ENCODE measurements at regions of chr10 and their contacts with region 1.

Region 1: DNA sequence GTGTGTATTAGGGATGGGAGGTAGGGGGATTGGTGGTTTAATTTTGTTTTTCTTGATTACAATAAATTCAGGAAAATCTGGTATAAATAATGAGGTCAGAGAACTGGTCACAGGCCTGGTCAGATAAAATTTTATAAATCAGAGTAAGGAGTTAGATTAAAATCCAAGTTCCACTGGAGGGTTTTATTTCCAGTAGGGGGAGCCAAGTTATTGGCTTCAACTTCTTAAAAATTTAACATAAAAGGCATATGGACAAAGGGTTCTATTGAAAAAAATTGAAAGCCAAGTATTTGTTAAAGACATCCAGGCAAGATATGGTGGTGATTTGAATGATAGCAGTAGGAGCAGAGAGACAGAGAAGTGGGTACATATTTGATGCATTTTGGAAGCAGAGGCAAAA is 763.3 kb downstream of the SORCS1 start:
- DNase-seq: peak; percentile 73
- H3K4me3 ChIP-seq: no peak overlapping the region
- H3K27ac ChIP-seq: no peak overlapping the region
- H3K4me1 ChIP-seq: peaks cover 30% of the 10 kb centered on the region
- H3K27me3 ChIP-seq: no peaks in the 10 kb centered on the region
- CTCF ChIP-seq: peak; percentile 76

Region 2: GRCh38 chr10:106500559-106501525 is 99.7 kb after region 1 on chr10:
- CTCF ChIA-PET with region 1: no interaction called
- POLR2A ChIA-PET with region 1: no interaction called
- intact Hi-C with region 1: loop called (anchors 5 kb)
- DNase-seq: no peak
- H3K4me3 ChIP-seq: no peak overlapping the region
- H3K27ac ChIP-seq: peak overlapping the region; percentile 8
- H3K4me1 ChIP-seq: peaks cover 68% of the 10 kb centered on the region
- H3K27me3 ChIP-seq: no peaks in the 10 kb centered on the region
- CTCF ChIP-seq: no peak

Region 3: DNA sequence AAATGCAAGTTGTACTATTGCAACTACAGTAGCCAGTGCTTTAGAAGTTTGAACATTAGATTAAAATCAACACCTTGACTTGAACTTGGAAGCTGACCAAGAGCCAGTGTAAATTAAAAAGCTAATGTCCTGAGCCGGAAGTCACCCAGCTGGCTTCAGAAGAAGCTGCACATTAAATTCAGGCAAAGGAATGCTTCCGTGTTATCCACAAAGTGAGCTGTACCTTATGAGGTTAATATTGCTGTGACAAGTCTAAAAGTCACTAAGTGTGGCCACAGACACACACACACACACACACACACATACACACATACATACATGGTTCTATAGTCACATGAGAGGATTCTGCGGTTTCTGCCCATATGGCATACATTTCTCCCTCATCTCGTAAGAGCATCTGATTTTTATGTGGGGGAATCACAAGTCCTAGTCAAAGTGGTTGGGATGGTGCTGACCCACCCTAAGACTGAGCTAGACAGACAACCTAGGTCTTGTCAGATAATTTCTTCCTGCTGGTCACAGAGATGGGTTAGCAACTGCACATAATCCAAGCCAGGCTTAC is 150.4 kb after region 1 on chr10:
- CTCF ChIA-PET with region 1: no interaction called
- POLR2A ChIA-PET with region 1: no interaction called
- intact Hi-C with region 1: loop called (anchors 5 kb)
- DNase-seq: peak; percentile 93
- H3K4me3 ChIP-seq: peak overlapping the region; percentile 51
- H3K27ac ChIP-seq: peak overlapping the region; percentile 90
- H3K4me1 ChIP-seq: peaks cover 66% of the 10 kb centered on the region
- H3K27me3 ChIP-seq: no peaks in the 10 kb centered on the region
- CTCF ChIP-seq: no peak

Region 4: DNA sequence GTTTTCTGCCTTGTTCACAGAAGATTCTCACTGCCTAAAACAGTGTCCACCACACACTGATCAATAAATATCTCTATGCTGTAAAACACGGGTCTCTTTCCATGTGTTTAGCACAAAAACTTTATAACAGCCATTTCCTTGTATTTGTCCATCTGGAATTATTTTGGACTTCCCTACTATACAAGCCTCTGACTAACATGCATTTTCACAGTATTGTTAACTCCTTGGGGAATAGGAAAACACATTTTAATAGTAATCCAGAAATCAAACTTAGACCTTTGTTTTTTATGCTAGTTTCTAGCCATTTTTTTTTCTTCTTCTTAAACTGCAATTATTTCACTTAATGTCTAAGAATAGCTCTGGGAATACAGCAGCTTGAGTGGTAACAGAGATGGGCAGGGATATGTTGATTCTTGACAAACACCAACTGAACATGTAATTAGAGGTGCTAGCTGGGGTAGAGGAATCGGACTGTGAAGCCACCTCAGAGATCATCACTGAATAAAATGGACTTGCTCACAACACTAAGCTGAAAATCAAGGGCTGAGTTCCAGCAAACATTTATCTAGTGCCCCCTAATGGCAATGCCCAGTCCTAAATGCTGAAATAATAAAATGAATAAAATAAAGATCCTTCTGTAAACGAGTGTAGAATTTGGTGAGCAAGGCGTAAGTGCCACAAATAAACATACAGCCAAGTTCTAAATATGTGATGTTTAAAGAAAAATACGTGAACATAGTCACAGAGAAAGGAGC is 170.2 kb after region 1 on chr10:
- CTCF ChIA-PET with region 1: interaction called, 4 read pairs
- POLR2A ChIA-PET with region 1: no interaction called
- intact Hi-C with region 1: loop called (anchors 2 kb)
- DNase-seq: peak; percentile 82
- H3K4me3 ChIP-seq: no peak overlapping the region
- H3K27ac ChIP-seq: no peak overlapping the region
- H3K4me1 ChIP-seq: peaks cover 39% of the 10 kb centered on the region
- H3K27me3 ChIP-seq: no peaks in the 10 kb centered on the region
- CTCF ChIP-seq: peak; percentile 79

Region 5: DNA sequence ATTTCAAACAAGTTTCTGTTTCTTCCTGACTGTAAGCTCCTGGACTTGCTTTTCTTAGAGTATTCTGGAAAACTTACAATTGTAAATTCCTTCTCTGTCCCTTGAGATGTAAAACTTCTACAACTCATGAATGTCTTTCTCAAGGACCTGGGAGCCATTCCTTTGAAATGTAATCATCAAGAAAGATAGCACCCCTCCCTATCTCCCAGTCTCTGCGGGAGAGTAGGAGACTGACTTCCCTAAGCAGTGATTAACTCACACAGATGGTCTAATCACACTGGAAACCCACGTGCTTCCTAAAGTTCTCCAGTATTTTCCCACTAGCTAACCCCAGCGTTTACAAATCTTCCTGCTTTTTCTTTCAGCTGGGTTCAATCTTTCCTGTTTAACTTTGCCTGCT is 213.9 kb after region 1 on chr10:
- CTCF ChIA-PET with region 1: no interaction called
- POLR2A ChIA-PET with region 1: no interaction called
- intact Hi-C with region 1: loop called (anchors 5 kb)
- DNase-seq: no peak
- H3K4me3 ChIP-seq: no peak overlapping the region
- H3K27ac ChIP-seq: no peak overlapping the region
- H3K4me1 ChIP-seq: peaks cover 17% of the 10 kb centered on the region
- H3K27me3 ChIP-seq: no peaks in the 10 kb centered on the region
- CTCF ChIP-seq: no peak

Region 6: DNA sequence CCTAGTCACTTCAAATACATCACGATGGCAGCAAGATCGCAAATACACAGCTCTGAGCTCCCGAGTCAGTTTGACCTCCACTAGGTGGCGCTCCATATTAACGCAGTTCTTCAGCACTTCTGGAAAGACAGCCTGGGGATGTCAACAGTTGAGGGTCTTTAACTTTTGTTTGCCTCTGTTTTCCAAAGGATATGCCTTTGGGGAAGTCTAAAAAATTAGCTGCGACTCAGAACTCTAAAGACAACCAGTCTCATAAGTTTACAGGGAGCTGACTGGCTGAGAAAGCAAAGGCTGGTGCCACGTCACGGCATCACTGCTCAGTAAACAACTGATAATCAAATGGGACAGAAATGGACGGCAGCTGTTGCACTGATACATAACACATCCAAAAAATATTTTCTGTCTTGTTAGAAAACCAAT is 304.5 kb after region 1 on chr10:
- CTCF ChIA-PET with region 1: no interaction called
- POLR2A ChIA-PET with region 1: no interaction called
- intact Hi-C with region 1: loop called (anchors 10 kb)
- DNase-seq: peak; percentile 81
- H3K4me3 ChIP-seq: no peak overlapping the region
- H3K27ac ChIP-seq: no peak overlapping the region
- H3K4me1 ChIP-seq: no peaks in the 10 kb centered on the region
- H3K27me3 ChIP-seq: no peaks in the 10 kb centered on the region
- CTCF ChIP-seq: peak; percentile 93